Head of caudate nucleus (tissue), 42 donors: ENCODE measurements at regions of chr2 and their contacts with region 1.

Region 1: DNA sequence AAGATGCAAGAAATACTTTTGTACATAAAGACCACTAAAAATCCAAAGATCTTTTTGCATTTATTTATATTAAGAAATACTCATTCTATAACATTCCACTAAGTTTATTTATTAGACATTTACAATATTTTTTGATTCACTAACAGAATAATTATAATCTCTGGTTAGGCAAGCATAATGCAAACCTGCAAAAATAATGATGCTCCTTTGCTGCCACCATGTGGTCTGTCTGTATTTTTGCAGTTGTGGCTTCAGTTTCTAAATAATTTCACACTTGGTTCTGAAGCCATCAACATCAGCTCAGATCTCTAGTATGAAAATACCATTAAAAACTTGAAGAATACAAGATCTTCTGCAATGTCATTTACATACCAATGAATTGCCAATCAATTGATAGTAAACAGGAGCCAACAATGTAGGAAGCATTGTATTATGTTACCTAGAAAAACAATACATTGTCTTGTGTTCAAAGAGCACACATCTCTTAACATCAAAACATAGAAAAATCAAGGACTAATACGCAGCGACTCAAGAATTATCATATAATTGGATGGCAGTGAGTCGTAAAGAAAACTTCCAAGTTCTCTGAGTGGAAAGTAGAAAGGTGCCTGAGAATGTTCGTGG is 28.8 kb upstream of the WDR75 start:
- DNase-seq: peak in 30 of 42 donors; percentile 7 to 74 (median 45)

Region 2: DNA sequence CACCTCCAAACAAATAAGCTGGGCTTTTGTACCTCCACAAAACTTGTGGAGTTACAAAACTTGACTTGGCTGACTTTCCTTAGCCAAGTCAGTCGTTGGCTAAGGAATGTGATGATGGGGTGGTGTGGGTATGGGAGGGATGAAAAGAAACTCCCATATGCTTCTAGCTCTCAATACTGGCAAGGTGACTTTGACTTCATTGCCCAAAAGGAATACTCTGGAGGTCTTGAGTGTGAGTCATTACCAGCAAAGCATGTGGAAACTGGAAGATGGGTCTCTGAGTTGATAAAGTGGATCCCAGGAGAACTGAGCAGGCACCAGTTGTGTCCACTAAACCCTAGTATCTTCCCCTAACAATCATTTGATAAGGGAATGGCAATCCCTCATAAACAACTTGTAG is 894.1 kb before region 1 on chr2:
- intact Hi-C with region 1: loop called (anchors 5 kb)
- DNase-seq: no peak

Region 3: DNA sequence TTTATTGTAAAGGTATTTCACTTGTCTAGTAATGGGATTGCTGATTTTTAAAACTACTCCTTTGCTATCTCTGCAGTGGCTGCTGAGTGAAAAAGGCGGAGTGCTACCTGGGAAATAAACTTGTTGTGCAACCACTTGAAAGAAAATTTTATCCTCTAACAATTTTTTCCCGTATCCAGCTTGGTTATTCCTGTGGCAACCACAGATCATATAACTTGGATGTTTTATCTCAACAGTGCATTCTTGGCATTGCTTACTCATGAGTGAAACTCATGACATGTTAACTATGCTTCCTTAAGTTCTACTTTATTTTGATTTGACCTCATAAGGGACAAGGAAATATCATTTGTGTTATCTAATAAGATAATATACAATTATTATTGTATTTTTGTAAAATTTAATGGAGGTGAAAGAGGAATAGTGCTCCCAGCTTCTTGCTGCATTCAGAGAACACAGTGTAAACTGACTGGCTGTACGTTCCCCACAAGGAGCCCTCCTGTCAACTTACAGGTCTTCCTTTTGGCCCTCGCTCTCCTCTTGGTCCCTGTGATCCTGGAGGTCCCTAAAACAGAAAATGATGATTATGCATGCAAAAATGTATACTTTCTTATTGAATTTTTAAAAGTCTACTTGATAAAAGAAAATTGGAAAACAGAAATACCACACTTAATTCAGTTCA is 315.5 kb before region 1 on chr2:
- intact Hi-C with region 1: loop called (anchors 10 kb)
- DNase-seq: no peak